HCT116 (cell line): ENCODE measurements at regions of chr1 and their contacts with region 1.

Region 1: DNA sequence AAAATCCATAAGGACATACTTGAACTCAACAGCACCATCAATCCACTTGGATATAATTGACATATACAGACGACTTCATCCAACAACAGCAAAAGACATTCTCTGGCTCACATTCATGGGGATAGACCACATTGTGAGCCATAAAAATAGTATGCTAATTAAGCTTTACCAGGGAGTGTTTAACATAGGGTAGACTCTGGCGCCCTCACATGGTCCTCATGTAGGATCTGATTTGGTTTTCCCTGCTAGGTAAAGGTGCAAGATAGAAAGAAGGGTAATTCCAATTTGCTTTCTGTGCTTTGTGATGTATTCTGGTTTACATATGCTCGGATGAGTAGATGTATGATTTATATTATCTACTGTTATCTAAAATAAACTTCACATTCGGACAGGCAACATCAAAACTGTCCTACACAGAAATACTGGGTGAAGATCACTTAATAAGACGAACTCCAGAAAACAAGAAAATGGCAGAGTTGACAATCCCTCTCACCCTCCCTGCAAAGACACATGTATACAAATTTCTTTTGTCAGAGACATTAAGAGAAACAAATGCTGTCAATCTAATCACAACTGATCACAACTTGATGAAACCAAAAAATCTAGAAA is 27.7 kb downstream of the CR1L start:
- DNase-seq: peak; percentile 45
- ATAC-seq: peak; percentile 99
- H3K4me3 ChIP-seq: no peak overlapping the region
- H3K27ac ChIP-seq: no peak overlapping the region
- H3K4me1 ChIP-seq: no peaks in the 10 kb centered on the region
- H3K27me3 ChIP-seq: no peaks in the 10 kb centered on the region
- CTCF ChIP-seq: peak; percentile 66 to 79 (median 78)
- POLR2A ChIP-seq: no peak
- RAD21 ChIP-seq: peak; percentile 89

Region 2: DNA sequence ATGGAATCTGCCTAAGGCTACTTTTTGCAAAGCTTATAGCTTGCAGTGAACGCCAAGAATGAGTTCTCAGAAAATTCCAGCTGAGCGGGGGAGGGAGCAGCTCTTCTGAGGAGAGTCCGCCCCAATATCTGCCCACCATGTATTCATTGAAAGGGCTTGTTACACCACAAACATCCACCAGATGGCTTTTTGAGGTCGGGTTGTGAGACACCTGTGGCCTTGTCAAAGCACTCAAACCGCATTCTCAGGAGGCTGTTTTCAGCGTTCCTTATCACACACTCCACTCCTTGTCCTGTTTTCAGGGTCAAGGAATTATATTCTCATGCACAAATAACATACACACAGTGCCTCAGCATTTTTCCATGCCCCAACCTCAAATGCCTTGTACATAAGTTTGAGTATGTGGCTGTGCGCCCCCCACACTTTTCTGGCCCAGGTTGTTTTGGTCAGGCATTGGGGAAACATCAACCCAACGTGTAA is 587.9 kb before region 1 on chr1:
- CTCF ChIA-PET with region 1: interaction called, 4 read pairs
- POLR2A ChIA-PET with region 1: no interaction called
- RAD21 ChIA-PET with region 1: no interaction called
- intact Hi-C with region 1: loop called (anchors 10 kb)
- DNase-seq: peak; percentile 69
- ATAC-seq: peak; percentile 99
- H3K4me3 ChIP-seq: no peak overlapping the region
- H3K27ac ChIP-seq: no peak overlapping the region
- H3K4me1 ChIP-seq: peaks cover 0 to 4% of the 10 kb centered on the region in 2 experiments; a peak in 2 of 4 replicates
- H3K27me3 ChIP-seq: 0 out of 2 replicates have a peak, but pooled peaks cover 3% of the 10 kb centered on the region
- CTCF ChIP-seq: peak; percentile 61 to 84 (median 62)
- POLR2A ChIP-seq: no peak
- RAD21 ChIP-seq: peak; percentile 85

Region 3: GRCh38 chr1:207719234-207719633 is 46.6 kb after region 1 on chr1:
- CTCF ChIA-PET with region 1: no interaction called
- POLR2A ChIA-PET with region 1: no interaction called
- RAD21 ChIA-PET with region 1: no interaction called
- intact Hi-C with region 1: no loop called
- DNase-seq: no peak
- ATAC-seq: no peak
- H3K4me3 ChIP-seq: no peak overlapping the region
- H3K27ac ChIP-seq: no peak overlapping the region
- H3K4me1 ChIP-seq: no peaks in the 10 kb centered on the region
- H3K27me3 ChIP-seq: no peaks in the 10 kb centered on the region
- CTCF ChIP-seq: no peak
- POLR2A ChIP-seq: no peak
- RAD21 ChIP-seq: no peak